Activated CD4-positive, alpha-beta memory T cell treated with anti-CD3 and anti-CD28 coated beads for 36 hours (primary cell): ENCODE measurements at regions of chr3 and their contacts with region 1.

Region 1: GRCh38 chr3:150787741-150788370 is 24.9 kb upstream of the SIAH2 start:
- DNase-seq: peak; percentile 90
- H3K4me3 Mint-ChIP-seq: no peak overlapping the region
- H3K27ac Mint-ChIP-seq: peak overlapping the region; percentile 10
- H3K4me1 Mint-ChIP-seq: peaks cover 46% of the 10 kb centered on the region
- H3K27me3 Mint-ChIP-seq: peaks cover 2% of the 10 kb centered on the region

Region 2: GRCh38 chr3:150371741-150372254 is 416.1 kb before region 1 on chr3:
- CTCF ChIA-PET with region 1: no interaction called
- POLR2A ChIA-PET with region 1: no interaction called
- intact Hi-C with region 1: no loop called
- DNase-seq: no peak
- H3K4me3 Mint-ChIP-seq: no peak overlapping the region
- H3K27ac Mint-ChIP-seq: no peak overlapping the region
- H3K4me1 Mint-ChIP-seq: peaks cover 4% of the 10 kb centered on the region
- H3K27me3 Mint-ChIP-seq: no peaks in the 10 kb centered on the region

Region 3: DNA sequence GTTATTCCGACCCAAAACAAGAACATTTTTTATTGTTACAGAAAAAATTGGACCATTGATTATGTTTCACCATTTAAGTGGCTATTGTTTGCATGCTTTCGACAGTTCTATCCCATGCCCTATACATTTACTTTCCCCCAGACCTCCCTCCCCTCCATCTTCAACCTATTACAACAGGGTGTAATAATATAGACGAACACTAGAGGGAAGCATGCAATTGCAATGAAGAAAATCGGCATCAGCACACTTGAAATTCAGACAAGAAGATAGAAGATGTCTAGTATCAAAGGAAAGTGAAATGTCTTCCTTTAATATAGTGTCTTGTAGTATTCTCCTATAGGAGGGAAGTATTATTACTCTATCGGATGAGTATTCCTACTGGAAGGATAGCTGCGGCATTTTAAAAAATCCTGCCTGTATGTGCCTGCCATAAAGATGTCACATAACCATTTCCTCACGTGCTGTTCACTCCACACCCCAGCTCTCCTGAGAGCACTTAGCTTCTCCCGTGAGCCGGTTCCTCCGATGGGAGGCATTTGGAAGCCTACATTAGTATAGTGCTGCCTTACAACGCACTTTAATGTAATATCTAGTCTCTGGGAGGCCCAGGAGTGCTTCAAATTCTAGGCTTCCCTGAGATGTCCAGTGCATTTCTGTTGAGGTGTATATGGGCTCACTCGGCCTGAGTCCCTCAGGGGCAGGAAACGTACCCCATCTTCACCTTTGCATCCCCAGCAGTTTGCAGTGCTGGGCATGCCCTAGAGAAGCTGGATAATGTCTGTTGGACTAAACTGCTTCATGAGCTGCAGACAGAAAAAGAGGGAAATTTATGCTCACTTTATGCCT is 66.3 kb before region 1 on chr3:
- CTCF ChIA-PET with region 1: interaction called, 44 read pairs
- POLR2A ChIA-PET with region 1: no interaction called
- intact Hi-C with region 1: loop called (anchors 1 kb)
- DNase-seq: no peak
- H3K4me3 Mint-ChIP-seq: peak overlapping the region; percentile 29
- H3K27ac Mint-ChIP-seq: no peak overlapping the region
- H3K4me1 Mint-ChIP-seq: peaks cover 24% of the 10 kb centered on the region
- H3K27me3 Mint-ChIP-seq: no peaks in the 10 kb centered on the region

Region 4: GRCh38 chr3:150861851-150862250 is 74.0 kb after region 1 on chr3:
- CTCF ChIA-PET with region 1: interaction called, 64 read pairs
- POLR2A ChIA-PET with region 1: interaction called, 3 read pairs
- intact Hi-C with region 1: loop called (anchors 1 kb)
- DNase-seq: no peak
- H3K4me3 Mint-ChIP-seq: no peak overlapping the region
- H3K27ac Mint-ChIP-seq: no peak overlapping the region
- H3K4me1 Mint-ChIP-seq: peaks cover 4% of the 10 kb centered on the region
- H3K27me3 Mint-ChIP-seq: peaks cover 17% of the 10 kb centered on the region

Region 5: DNA sequence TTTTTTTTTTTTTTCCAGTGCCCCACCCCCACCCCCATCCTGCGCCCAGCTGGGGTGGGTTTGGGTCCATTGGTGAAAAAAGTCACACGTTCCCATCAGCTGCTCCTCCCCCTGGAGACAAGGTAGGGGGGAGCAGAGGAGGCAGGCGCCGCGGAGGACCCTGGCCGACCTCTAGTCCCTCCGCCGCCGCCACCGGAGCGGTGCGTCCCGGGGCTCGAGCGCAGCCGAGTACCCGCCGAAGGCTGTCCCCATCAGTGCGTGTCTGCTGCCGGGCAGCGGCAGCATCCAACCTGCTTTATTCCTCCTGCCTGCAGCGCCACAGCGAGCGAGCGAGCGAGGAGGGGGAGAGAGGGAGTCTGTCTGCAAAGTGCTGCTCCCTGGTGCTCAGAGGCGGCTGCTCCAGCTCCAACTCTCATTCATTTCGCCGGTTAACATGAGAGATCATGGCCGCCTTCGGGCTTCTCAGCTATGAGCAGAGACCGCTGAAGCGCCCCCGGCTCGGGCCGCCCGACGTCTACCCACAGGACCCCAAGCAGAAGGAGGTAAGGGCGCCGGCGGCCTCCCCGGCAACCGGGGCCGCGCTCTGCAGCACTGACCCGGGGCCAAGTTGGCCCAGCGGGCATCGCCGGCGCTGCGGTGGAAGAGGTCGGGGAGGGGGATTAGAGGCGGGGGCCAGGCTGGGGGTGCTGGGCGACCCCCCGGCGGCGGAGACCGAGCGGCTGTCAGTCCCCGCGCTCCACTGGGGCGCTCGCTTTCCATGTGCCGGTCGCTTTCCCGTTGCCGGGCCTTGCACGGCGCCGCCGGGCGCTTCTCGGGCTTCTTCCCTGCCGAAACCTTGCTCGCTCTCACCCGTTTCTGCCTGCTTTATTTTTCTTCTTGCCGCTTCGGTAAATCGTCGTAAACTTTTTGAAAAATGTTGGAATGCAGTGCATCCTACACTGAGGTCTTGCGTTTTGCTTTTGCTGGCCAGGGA is 298.9 kb after region 1 on chr3:
- CTCF ChIA-PET with region 1: interaction called, 7 read pairs
- POLR2A ChIA-PET with region 1: interaction called, 3 read pairs
- intact Hi-C with region 1: loop called (anchors 1 kb)
- DNase-seq: peak; percentile 86
- H3K4me3 Mint-ChIP-seq: peak overlapping the region; percentile 80
- H3K27ac Mint-ChIP-seq: no peak overlapping the region
- H3K4me1 Mint-ChIP-seq: peaks cover 11% of the 10 kb centered on the region
- H3K27me3 Mint-ChIP-seq: peaks cover 27% of the 10 kb centered on the region

Region 6: GRCh38 chr3:151203051-151203420 is 415.2 kb after region 1 on chr3 and contains the start of gene GPR171:
- CTCF ChIA-PET with region 1: interaction called, 3 read pairs
- POLR2A ChIA-PET with region 1: interaction called, 3 read pairs
- intact Hi-C with region 1: loop called (anchors 2 kb)
- DNase-seq: peak; percentile 84
- H3K4me3 Mint-ChIP-seq: peak within 1 kb of the TSS; percentile 86
- H3K27ac Mint-ChIP-seq: peak within 1 kb of the TSS; percentile 99
- H3K4me1 Mint-ChIP-seq: peaks cover 65% of the 10 kb centered on the region
- H3K27me3 Mint-ChIP-seq: no peaks in the 10 kb centered on the region
- total RNA-seq, gene GPR171: 70.7 to 74.0 TPM